ENCODE measurements at regions of chr15 and their contacts with region 1.

Region 1: GRCh38 chr15:69160141-69160993 is at the start of gene GLCE:
- DNase-seq: peak; percentile 97 to 99
- ATAC-seq: peak; percentile 93 to 96
- H3K4me3 ChIP-seq: peak within 1 kb of the TSS; percentile 82
- H3K27ac ChIP-seq: peak within 1 kb of the TSS; percentile 84 to 89
- H3K4me1 ChIP-seq: peaks cover 22% of the 10 kb centered on the region
- CTCF ChIP-seq: 0 out of 3 replicates have a peak, but pooled peaks have one; percentile 4
- EP300 ChIP-seq: no peak
- POLR2A ChIP-seq: peak; percentile 96
- RAD21 ChIP-seq: peak in 1 of 2 experiments; percentile 12; a peak in 2 of 5 replicates
- polyA plus RNA-seq, gene GLCE: 41.8 TPM in 2 replicates

Region 2: DNA sequence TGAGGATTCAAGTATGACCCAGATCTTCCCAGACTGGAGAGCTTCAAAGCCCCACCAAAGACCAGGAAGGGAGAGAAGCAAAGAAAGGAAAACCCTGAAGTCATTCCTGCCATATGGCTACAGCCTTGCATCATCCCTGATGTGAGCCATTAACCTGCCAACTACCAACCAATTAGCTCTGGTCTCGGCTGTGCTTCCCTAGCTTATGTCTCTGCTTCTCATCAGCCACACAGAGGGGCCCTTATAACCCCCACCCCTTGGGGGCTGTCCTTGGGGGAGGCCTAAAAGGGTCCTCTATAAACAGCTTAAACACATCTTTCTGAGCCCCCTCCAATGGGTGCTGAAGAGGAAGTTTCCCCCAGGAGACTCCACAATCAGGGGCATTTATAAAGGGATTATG is 93.1 kb before region 1 on chr15:
- CTCF ChIA-PET with region 1: interaction called, 12 read pairs
- POLR2A ChIA-PET with region 1: interaction called, 4 read pairs
- DNase-seq: no peak
- ATAC-seq: no peak
- H3K4me3 ChIP-seq: no peak overlapping the region
- H3K27ac ChIP-seq: peak overlapping the region in 1 of 2 experiments; percentile 15; a peak in 1 of 6 replicates
- H3K4me1 ChIP-seq: peaks cover 9% of the 10 kb centered on the region
- CTCF ChIP-seq: no peak
- EP300 ChIP-seq: no peak
- POLR2A ChIP-seq: no peak
- RAD21 ChIP-seq: no peak

Region 3: DNA sequence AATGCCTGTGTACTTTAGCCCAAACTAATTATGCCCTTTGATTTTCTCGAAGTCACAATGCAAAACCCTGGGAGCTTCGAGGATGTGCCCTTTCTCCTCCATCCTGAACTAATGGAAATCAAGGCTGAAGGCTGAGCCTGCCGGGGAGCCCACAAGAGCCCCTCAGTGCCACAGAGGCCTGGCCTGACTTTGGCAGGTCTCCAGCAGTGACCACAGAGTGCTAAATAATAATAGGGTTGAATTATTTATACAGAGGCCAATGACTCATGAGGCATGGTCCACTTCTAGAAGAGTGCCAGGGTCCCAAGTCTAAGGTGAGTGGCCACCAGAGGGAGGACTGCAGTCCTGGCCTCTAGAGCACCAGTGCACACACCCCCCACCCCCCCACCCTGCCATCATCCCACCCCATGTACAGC is 19.1 kb before region 1 on chr15:
- CTCF ChIA-PET with region 1: interaction called, 18 read pairs
- POLR2A ChIA-PET with region 1: interaction called, 6 read pairs
- DNase-seq: peak; percentile 60 to 63
- ATAC-seq: peak; percentile 72 to 87; a peak in 5 of 6 replicates
- H3K4me3 ChIP-seq: no peak overlapping the region
- H3K27ac ChIP-seq: no peak overlapping the region
- H3K4me1 ChIP-seq: peaks cover 9% of the 10 kb centered on the region
- CTCF ChIP-seq: no peak; the same call in 1 of the 3 replicates
- EP300 ChIP-seq: no peak
- POLR2A ChIP-seq: no peak
- RAD21 ChIP-seq: peak in 1 of 2 experiments; percentile 7; a peak in 1 of 5 replicates

Region 4: GRCh38 chr15:69185216-69185615 is 24.8 kb after region 1 on chr15:
- CTCF ChIA-PET with region 1: interaction called, 14 read pairs
- POLR2A ChIA-PET with region 1: no interaction called
- DNase-seq: no peak
- ATAC-seq: no peak
- H3K4me3 ChIP-seq: no peak overlapping the region
- H3K27ac ChIP-seq: no peak overlapping the region
- H3K4me1 ChIP-seq: no peaks in the 10 kb centered on the region
- CTCF ChIP-seq: no peak
- EP300 ChIP-seq: no peak
- POLR2A ChIP-seq: no peak
- RAD21 ChIP-seq: no peak

Region 5: GRCh38 chr15:69244798-69245197 is 84.4 kb after region 1 on chr15:
- CTCF ChIA-PET with region 1: interaction called, 11 read pairs
- POLR2A ChIA-PET with region 1: no interaction called
- DNase-seq: no peak
- ATAC-seq: no peak
- H3K4me3 ChIP-seq: no peak overlapping the region
- H3K27ac ChIP-seq: no peak overlapping the region
- H3K4me1 ChIP-seq: 0 out of 3 replicates have a peak, but pooled peaks cover 3% of the 10 kb centered on the region
- CTCF ChIP-seq: no peak
- EP300 ChIP-seq: no peak
- POLR2A ChIP-seq: no peak
- RAD21 ChIP-seq: no peak

Region 6: DNA sequence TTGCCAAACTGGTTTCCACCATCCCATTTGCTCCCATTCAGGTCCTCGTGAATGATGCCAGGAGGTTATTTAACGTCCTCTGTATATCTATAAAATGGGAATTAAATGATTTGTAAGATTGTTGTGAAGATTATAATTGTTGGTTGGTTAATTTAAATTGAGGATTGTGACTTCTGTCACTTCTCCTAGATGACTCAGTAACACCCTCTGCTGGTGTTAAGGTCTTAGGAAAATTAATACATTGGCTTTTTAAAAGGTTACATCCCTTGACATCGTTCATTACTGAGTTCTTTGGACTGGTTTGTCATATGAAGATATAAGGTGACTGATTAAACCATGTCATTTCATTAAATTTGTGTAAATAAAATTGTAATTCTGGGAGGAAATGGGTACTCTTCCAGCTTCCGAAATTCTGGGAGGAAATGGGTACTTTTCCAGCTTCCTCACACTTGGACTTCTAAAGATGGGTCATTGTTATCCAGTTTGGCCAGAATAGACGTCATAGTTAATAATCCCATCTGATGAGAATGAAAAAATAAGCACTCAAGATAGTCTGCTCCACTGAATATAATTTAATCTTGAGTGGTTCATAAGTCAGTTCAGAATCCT is 105.1 kb after region 1 on chr15:
- CTCF ChIA-PET with region 1: interaction called, 32 read pairs
- POLR2A ChIA-PET with region 1: interaction called, 3 read pairs
- DNase-seq: peak; percentile 36 to 58
- ATAC-seq: peak in 1 of 2 experiments; percentile 59; a peak in 2 of 6 replicates
- H3K4me3 ChIP-seq: no peak overlapping the region
- H3K27ac ChIP-seq: no peak overlapping the region
- H3K4me1 ChIP-seq: no peaks in the 10 kb centered on the region
- CTCF ChIP-seq: peak; percentile 91
- EP300 ChIP-seq: no peak
- POLR2A ChIP-seq: no peak
- RAD21 ChIP-seq: peak; percentile 82 to 83

Region 7: GRCh38 chr15:69298697-69299441 is 138.5 kb after region 1 on chr15 and contains the start of gene PAQR5:
- CTCF ChIA-PET with region 1: interaction called, 6 read pairs
- POLR2A ChIA-PET with region 1: interaction called, 10 read pairs
- DNase-seq: peak; percentile 63 to 92
- ATAC-seq: peak; percentile 77 to 84
- H3K4me3 ChIP-seq: peak within 1 kb of the TSS; percentile 95
- H3K27ac ChIP-seq: peak within 1 kb of the TSS; percentile 94 to 96
- H3K4me1 ChIP-seq: peaks cover 39% of the 10 kb centered on the region
- CTCF ChIP-seq: no peak
- EP300 ChIP-seq: no peak
- POLR2A ChIP-seq: peak; percentile 64
- RAD21 ChIP-seq: no peak; a peak in 1 of 5 replicates
- polyA plus RNA-seq, gene PAQR5: 114 and 158 TPM in 2 replicates

Measured in A549 (cell line).